T-cell (primary cell): ENCODE measurements at regions of chr4 and their contacts with region 1.

Region 1: GRCh38 chr4:55517526-55518229 is 29.0 kb downstream of the CLOCK start:
- DNase-seq: no peak
- ATAC-seq: no peak
- H3K4me3 ChIP-seq: no peak overlapping the region
- H3K4me3 Mint-ChIP-seq: no peak overlapping the region
- H3K27ac ChIP-seq: no peak overlapping the region
- H3K27ac Mint-ChIP-seq: no peak overlapping the region
- H3K4me1 ChIP-seq: no peaks in the 10 kb centered on the region
- H3K4me1 Mint-ChIP-seq: peaks cover 8 to 17% (median 15%) of the 10 kb centered on the region in 3 donors
- H3K27me3 ChIP-seq: no peaks in the 10 kb centered on the region
- H3K27me3 Mint-ChIP-seq: no peaks in the 10 kb centered on the region

Region 2: GRCh38 chr4:55312489-55313101 is 205.1 kb before region 1 on chr4:
- CTCF ChIA-PET with region 1: interaction called in 1 of 2 experiments, 15 read pairs
- POLR2A ChIA-PET with region 1: no interaction called
- DNase-seq: peak in 26 of 35 experiments; percentile 2 to 64 (median 15)
- ATAC-seq: peak in 3 of 4 experiments; percentile 58 to 60 (median 59)
- H3K4me3 ChIP-seq: no peak overlapping the region
- H3K4me3 Mint-ChIP-seq: no peak overlapping the region
- H3K27ac ChIP-seq: no peak overlapping the region
- H3K27ac Mint-ChIP-seq: no peak overlapping the region
- H3K4me1 ChIP-seq: no peaks in the 10 kb centered on the region
- H3K4me1 Mint-ChIP-seq: no peaks in the 10 kb centered on the region
- H3K27me3 ChIP-seq: no peaks in the 10 kb centered on the region
- H3K27me3 Mint-ChIP-seq: peaks cover 0 to 4% of the 10 kb centered on the region in 2 donors

Region 3: GRCh38 chr4:55920571-55920970 is 402.9 kb after region 1 on chr4:
- CTCF ChIA-PET with region 1: no interaction called
- POLR2A ChIA-PET with region 1: no interaction called
- DNase-seq: no peak
- ATAC-seq: no peak
- H3K4me3 ChIP-seq: no peak overlapping the region
- H3K4me3 Mint-ChIP-seq: no peak overlapping the region
- H3K27ac ChIP-seq: no peak overlapping the region
- H3K27ac Mint-ChIP-seq: no peak overlapping the region
- H3K4me1 ChIP-seq: no peaks in the 10 kb centered on the region
- H3K4me1 Mint-ChIP-seq: no peaks in the 10 kb centered on the region
- H3K27me3 ChIP-seq: no peaks in the 10 kb centered on the region
- H3K27me3 Mint-ChIP-seq: no peaks in the 10 kb centered on the region

Region 4: GRCh38 chr4:56048702-56049431 is 531.2 kb after region 1 on chr4:
- CTCF ChIA-PET with region 1: no interaction called
- POLR2A ChIA-PET with region 1: no interaction called
- DNase-seq: peak in 19 of 35 experiments; percentile 1 to 31 (median 8)
- ATAC-seq: peak; percentile 78 to 89 (median 82)
- H3K4me3 ChIP-seq: peak overlapping the region in 1 of 2 donors; percentile 60
- H3K4me3 Mint-ChIP-seq: peak overlapping the region; percentile 52 to 68 (median 64)
- H3K27ac ChIP-seq: no peak overlapping the region
- H3K27ac Mint-ChIP-seq: no peak overlapping the region
- H3K4me1 ChIP-seq: peaks cover 2 to 11% of the 10 kb centered on the region in 2 experiments
- H3K4me1 Mint-ChIP-seq: peaks cover 9 to 18% (median 10%) of the 10 kb centered on the region in 3 donors
- H3K27me3 ChIP-seq: peaks cover 0 to 21% of the 10 kb centered on the region in 2 experiments
- H3K27me3 Mint-ChIP-seq: peaks cover 40 to 48% of the 10 kb centered on the region in 2 donors